GM10248 (cell line): ENCODE measurements at regions of chr4 and their contacts with region 1.

Region 1: DNA sequence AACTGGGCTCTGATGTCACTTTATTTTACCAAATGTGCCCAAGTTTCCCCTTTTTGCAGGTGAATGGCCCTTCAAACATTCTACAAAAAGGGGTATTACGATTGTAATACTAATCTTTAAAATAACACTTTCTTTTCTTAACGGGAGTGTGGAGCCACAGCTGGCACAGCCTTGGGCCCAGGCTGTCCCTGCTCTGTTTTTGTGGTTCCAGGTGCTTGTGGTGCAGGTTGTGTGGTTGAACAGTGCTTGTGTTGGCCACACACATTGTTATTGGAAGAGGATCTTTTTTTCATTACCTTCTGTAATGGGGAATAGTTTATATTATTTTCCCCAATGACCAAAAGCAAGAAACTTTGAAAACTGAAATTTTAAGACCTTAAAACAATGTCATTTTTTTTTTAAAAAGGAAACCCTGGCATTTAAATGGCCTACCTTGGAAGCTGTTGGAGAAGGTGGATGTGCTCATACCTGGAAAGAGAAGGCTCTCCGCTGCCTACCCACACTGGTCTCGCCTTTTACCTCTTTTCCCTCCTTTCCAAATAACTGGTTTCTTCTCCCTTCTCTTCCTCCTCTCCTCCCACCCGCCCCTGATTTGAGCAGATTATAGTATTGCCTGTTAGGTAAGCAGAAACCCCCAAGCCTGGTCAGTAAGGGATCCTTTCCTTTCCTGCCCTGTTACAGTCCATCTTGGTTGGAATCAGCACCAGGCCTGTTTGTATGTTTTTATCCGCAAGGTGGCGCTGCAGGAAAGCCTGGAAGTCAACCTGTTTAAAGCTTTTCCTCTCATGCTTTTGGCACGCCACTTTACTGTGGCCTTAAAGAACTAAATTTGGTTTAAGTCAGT is 28.6 kb downstream of the HADH start:
- DNase-seq: peak; percentile 74
- CTCF ChIP-seq: peak; percentile 88

Region 2: GRCh38 chr4:107989537-107990386 is 28.5 kb before region 1 on chr4 and contains the start of gene HADH:
- CTCF ChIA-PET with region 1: interaction called, 76 read pairs
- POLR2A ChIA-PET with region 1: interaction called, 3 read pairs
- DNase-seq: peak; percentile 97
- CTCF ChIP-seq: no peak

Region 3: DNA sequence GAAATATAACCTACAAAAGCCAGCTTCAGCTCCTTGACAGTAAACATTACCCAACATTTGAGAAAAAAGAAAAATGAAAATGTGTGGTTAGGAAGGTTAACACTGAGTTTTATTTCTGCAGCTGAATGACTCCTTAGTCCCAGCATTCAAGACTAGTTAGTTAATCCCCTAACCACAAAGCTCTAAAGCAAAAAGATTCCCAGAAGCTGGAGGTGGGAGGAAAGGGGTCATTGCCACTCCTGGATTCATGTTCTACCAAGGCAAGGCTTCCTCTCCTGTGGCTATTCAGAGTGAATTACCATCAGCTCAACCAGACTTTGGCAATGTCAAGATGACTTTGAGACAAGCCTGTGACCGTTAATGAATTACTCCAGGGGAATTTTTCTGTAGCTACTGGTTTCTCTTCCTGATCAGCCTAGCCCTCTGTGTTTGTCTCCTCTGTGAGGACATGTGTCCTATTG is 35.0 kb after region 1 on chr4:
- CTCF ChIA-PET with region 1: interaction called, 12 read pairs
- POLR2A ChIA-PET with region 1: no interaction called
- DNase-seq: peak; percentile 70
- CTCF ChIP-seq: no peak

Region 4: DNA sequence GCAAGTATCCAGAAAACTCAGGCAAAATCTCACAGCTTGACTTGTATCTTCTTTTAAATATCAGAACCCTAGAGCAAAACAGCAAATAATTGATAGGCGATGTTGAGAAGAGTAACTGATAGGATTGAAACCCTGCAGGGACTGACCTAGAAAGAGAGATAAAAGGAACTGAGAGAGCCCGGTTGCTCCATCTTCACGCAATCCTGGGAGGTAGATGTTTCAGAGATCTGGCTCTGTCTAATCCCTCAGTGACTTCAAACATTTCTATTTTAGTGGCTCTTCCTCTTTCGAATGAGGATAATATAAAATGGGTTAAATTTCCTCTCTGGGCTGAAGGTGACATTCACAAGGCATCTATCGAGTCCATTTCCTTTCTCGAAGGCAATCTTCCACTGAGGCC is 562.8 kb after region 1 on chr4:
- CTCF ChIA-PET with region 1: interaction called, 188 read pairs
- POLR2A ChIA-PET with region 1: no interaction called
- DNase-seq: no peak
- CTCF ChIP-seq: no peak